Activated naive CD8-positive, alpha-beta T cell treated with anti-CD3 and anti-CD28 coated beads, Interleukin-2, amount 10 ng/mL, durations not matched to agents 7 days and 5 days (primary cell): ENCODE measurements at regions of chr3 and their contacts with region 1.

Region 1: DNA sequence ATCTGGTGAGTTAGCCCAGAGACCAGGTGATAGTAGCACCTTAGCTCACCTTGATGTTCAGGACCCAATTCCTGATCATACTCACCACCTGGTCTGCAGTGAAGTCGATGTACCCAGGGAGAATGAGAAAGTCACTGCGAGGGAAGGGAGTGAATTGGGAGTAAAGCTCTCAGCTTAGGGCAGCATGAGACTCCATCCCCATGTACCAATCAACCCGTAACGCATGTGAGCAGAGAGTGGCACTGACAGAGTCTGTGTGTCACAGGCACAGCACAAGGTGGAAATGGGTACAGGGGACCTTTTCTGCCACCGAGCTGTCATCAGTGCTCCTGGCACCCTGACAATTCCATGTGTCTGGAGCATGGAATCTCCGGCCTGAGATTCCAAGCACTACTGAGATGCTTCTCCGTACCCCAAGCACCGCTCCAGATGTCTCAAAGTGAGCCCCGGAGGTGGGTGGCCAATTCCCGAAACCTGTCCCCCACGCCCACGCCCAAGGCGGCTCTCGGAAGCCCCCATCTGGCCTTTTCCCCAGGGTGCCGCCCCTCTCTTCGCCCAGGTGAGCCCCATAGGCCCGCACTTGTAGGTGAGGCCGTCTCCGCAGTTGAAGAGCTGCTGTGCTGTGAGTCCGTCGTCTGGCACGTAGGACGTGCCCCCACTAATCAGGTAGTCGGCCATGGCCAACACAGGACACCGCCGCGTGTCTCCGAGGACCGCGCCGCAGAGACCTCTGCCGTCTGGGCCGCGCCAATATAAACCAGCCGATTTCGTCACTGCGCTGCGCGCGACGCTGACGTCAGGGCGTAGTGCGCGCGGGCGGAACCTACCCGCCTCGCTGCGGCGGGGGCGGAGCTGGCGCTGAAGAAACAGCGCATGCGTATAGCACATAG is at the start of gene IMPDH2:
- DNase-seq: peak; percentile 96
- ATAC-seq: peak; percentile 92
- H3K4me3 Mint-ChIP-seq: peak within 1 kb of the TSS; percentile 94
- H3K27ac Mint-ChIP-seq: peak within 1 kb of the TSS; percentile 85
- H3K4me1 Mint-ChIP-seq: peaks cover 37% of the 10 kb centered on the region
- H3K27me3 Mint-ChIP-seq: no peaks in the 10 kb centered on the region
- total RNA-seq, gene IMPDH2: 145 to 146 TPM

Region 2: GRCh38 chr3:48989796-48990635 is 38.9 kb before region 1 on chr3 and contains the start of gene P4HTM:
- POLR2A ChIA-PET with region 1: interaction called, 28 read pairs
- DNase-seq: peak; percentile 84
- ATAC-seq: peak; percentile 81
- H3K4me3 Mint-ChIP-seq: peak within 1 kb of the TSS; percentile 88
- H3K27ac Mint-ChIP-seq: peak within 1 kb of the TSS; percentile 91
- H3K4me1 Mint-ChIP-seq: peaks cover 38% of the 10 kb centered on the region
- H3K27me3 Mint-ChIP-seq: no peaks in the 10 kb centered on the region
- total RNA-seq, gene P4HTM: 57.4 to 57.7 TPM

Region 3: GRCh38 chr3:49199900-49200281 is 171.0 kb after region 1 on chr3:
- POLR2A ChIA-PET with region 1: no interaction called
- DNase-seq: no peak
- ATAC-seq: no peak
- H3K4me3 Mint-ChIP-seq: no peak overlapping the region
- H3K27ac Mint-ChIP-seq: no peak overlapping the region
- H3K4me1 Mint-ChIP-seq: no peaks in the 10 kb centered on the region
- H3K27me3 Mint-ChIP-seq: peaks cover 16% of the 10 kb centered on the region